ENCODE measurements at regions of chr11 and their contacts with region 1.

Region 1: GRCh38 chr11:5767056-5767455 is 13.0 kb downstream of the OR52N4 start:
- DNase-seq: no peak
- H3K4me3 ChIP-seq: no peak overlapping the region
- H3K27ac ChIP-seq: no peak overlapping the region
- H3K4me1 ChIP-seq: no peaks in the 10 kb centered on the region
- H3K27me3 ChIP-seq: no peaks in the 10 kb centered on the region
- CTCF ChIP-seq: no peak
- EP300 ChIP-seq: no peak
- POLR2A ChIP-seq: no peak

Region 2: GRCh38 chr11:5791165-5791564 is 24.1 kb after region 1 on chr11 and contains the start of gene OR52N1:
- intact Hi-C with region 1: loop called (anchors 2 kb)
- DNase-seq: no peak
- H3K4me3 ChIP-seq: no peak within 1 kb of the TSS
- H3K27ac ChIP-seq: no peak within 1 kb of the TSS
- H3K4me1 ChIP-seq: no peaks in the 10 kb centered on the region
- H3K27me3 ChIP-seq: no peaks in the 10 kb centered on the region
- CTCF ChIP-seq: no peak
- EP300 ChIP-seq: no peak
- POLR2A ChIP-seq: no peak
- total RNA-seq, gene OR52N1: not detected

Measured in esophagus muscularis mucosa (tissue), 4 donors.